Astrocyte of the cerebellum (primary cell): ENCODE measurements at regions of chr5 and their contacts with region 1.

Region 1: DNA sequence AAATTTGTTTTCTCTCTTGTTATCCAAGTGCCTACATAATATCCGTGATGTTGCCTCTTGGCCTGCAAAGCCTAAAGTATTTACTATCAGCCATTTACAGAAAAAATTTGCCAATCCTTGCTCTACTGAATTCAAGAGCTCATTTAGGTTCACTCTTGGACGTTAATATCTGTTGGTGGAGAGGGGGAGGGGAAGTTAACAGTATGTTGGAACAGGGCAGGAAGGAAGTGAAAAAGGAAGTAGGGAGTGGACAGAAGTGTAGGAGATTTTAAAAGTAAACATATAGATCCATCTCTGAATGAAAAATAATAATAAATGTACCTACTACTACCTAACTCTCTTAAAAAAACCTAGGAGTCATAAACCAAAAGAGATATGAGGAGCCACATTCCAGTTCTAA is 32.8 kb downstream of the ZNF608 start:
- DNase-seq: no peak
- H3K4me3 ChIP-seq: no peak overlapping the region
- CTCF ChIP-seq: no peak

Region 2: GRCh38 chr5:124614105-124614504 is 99.5 kb before region 1 on chr5:
- in situ Hi-C with region 1: no loop called
- DNase-seq: no peak
- H3K4me3 ChIP-seq: no peak overlapping the region
- CTCF ChIP-seq: no peak

Region 3: GRCh38 chr5:124665625-124666024 is 48.0 kb before region 1 on chr5:
- in situ Hi-C with region 1: no loop called
- DNase-seq: no peak
- H3K4me3 ChIP-seq: no peak overlapping the region
- CTCF ChIP-seq: no peak

Region 4: DNA sequence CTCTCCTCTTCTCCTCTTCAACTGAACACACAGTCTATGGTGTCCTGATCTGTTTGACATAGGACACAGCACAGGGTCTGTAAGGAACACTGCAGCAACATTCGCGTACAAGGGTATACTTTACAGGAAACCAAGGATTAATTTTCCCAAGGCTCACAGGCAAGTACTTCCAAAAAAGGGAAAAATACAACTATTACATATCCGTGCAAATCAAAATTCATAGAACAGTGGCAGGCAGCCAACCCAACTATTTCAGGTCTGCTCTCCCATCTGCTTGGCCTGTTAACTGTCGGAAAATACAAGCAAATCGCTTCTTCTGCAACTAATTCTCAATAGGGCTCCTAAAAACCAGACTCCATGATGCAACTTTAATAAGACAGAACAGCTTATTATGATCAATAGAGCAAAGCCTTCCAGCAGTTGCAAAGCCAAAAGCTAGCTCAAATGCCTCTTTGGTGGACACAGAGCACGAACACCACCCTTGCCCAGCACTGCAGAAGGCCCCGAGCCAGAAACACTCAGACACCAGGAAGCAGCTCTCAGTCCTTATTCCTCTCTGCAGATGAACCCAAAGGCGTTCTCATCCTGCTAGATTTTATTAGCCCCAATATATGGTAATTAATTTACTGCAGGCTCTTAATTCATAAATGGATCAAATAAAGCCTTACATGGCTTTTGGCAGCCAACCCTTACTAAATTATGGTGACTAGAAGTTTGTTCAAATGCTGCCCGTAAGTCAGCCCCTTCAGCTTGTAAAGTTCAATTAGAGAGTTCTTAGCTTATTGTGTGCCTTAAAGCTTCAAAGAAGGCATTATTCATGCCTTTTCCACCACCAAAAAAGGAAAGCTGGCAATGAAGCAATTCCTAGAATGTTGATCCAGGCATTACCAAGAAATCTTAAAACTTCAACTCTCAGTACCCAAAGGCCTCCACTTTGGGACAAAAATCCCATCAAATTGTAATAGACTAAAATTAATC is 35.9 kb before region 1 on chr5:
- in situ Hi-C with region 1: loop called (anchors 5 kb)
- DNase-seq: no peak
- H3K4me3 ChIP-seq: no peak overlapping the region
- CTCF ChIP-seq: no peak

Region 5: GRCh38 chr5:124748687-124749594 is 35.3 kb after region 1 on chr5:
- in situ Hi-C with region 1: no loop called
- DNase-seq: peak; percentile 83
- H3K4me3 ChIP-seq: peak overlapping the region; percentile 71
- CTCF ChIP-seq: peak; percentile 3